Naive thymus-derived CD4-positive, alpha-beta T cell (primary cell): ENCODE measurements at regions of chr17 and their contacts with region 1.

Region 1: GRCh38 chr17:35088881-35089585 is 25.5 kb upstream of the RFFL start:
- DNase-seq: peak; percentile 77 to 95 (median 89)
- ATAC-seq: peak; percentile 94
- H3K4me3 ChIP-seq: peak overlapping the region; percentile 93
- H3K4me3 Mint-ChIP-seq: peak overlapping the region; percentile 93 to 98 (median 94)
- H3K27ac ChIP-seq: peak overlapping the region; percentile 89
- H3K27ac Mint-ChIP-seq: peak overlapping the region; percentile 89 to 97 (median 94)
- H3K4me1 ChIP-seq: peaks cover 13 to 27% of the 10 kb centered on the region in 2 donors
- H3K4me1 Mint-ChIP-seq: peaks cover 21 to 52% (median 44%) of the 10 kb centered on the region in 7 donors
- H3K27me3 ChIP-seq: no peaks in the 10 kb centered on the region
- H3K27me3 Mint-ChIP-seq: no peaks in the 10 kb centered on the region

Region 2: GRCh38 chr17:34584805-34585416 is 504.1 kb before region 1 on chr17:
- CTCF ChIA-PET with region 1: no interaction called
- POLR2A ChIA-PET with region 1: no interaction called
- intact Hi-C with region 1: loop called in 1 of 2 experiments (anchors 1 kb)
- DNase-seq: peak in 4 of 9 donors; percentile 21 to 35 (median 32)
- ATAC-seq: peak; percentile 51
- H3K4me3 ChIP-seq: no peak overlapping the region
- H3K4me3 Mint-ChIP-seq: no peak overlapping the region
- H3K27ac ChIP-seq: no peak overlapping the region
- H3K27ac Mint-ChIP-seq: no peak overlapping the region
- H3K4me1 ChIP-seq: peaks cover 0 to 6% of the 10 kb centered on the region in 2 donors
- H3K4me1 Mint-ChIP-seq: peaks cover 0 to 15% (median 4%) of the 10 kb centered on the region in 7 donors
- H3K27me3 ChIP-seq: peaks cover 0 to 7% of the 10 kb centered on the region in 2 donors
- H3K27me3 Mint-ChIP-seq: peaks cover 41 to 78% (median 52%) of the 10 kb centered on the region in 5 donors

Region 3: DNA sequence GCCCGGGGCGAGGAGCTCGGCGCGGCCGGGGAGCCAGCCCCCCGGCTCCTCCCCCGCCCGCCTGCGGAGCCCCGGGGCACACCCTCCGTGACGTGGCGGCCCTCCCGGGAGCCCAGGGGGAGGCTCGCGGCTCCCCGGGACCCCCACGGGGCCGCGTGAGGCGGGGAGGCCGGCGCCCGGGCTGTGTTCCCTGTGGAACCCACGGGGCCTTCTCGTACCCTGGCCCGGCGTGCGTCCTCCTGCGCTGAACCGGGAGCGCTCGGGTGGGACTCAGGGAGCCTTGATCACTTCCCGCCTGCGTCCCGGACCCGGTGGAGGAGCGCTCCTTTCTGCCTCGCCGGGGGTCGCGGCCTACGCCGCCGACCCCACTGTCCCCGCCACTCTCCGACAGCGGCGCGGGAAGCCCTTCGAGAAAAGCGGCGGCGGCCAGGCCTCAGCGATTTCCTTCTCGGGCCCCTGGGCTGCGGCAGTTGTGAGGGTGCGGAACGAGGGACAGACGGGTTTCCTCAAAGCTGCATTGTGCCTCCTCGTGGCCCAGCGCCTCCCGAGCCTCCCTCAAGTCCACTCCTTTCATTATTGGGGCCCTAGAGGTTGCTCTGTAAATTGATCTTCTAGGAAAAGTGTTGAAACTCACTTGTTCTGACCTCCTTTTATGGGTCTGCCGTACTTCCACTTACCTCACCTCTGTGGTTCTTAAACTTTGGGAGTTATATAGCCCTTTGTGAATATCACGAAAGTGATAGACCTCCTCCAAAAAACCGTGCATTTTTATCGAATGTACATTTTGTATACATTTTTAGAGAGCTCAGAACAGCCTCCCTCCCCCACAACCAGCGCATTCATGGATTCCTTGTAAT is 108.1 kb before region 1 on chr17:
- CTCF ChIA-PET with region 1: no interaction called
- POLR2A ChIA-PET with region 1: interaction called, 14 read pairs
- intact Hi-C with region 1: loop called (anchors 1 kb)
- DNase-seq: peak in 7 of 9 donors; percentile 65 to 87 (median 74)
- ATAC-seq: peak; percentile 91
- H3K4me3 ChIP-seq: peak overlapping the region; percentile 68
- H3K4me3 Mint-ChIP-seq: peak overlapping the region; percentile 87 to 97 (median 94)
- H3K27ac ChIP-seq: peak overlapping the region; percentile 99
- H3K27ac Mint-ChIP-seq: peak overlapping the region; percentile 91 to 98 (median 97)
- H3K4me1 ChIP-seq: peaks cover 17 to 26% of the 10 kb centered on the region in 2 donors
- H3K4me1 Mint-ChIP-seq: peaks cover 36 to 57% (median 53%) of the 10 kb centered on the region in 7 donors
- H3K27me3 ChIP-seq: no peaks in the 10 kb centered on the region
- H3K27me3 Mint-ChIP-seq: no peaks in the 10 kb centered on the region

Region 4: GRCh38 chr17:35046740-35047283 is 42.2 kb before region 1 on chr17:
- CTCF ChIA-PET with region 1: interaction called, 3 read pairs
- POLR2A ChIA-PET with region 1: interaction called, 13 read pairs
- intact Hi-C with region 1: loop called (anchors 1 kb)
- DNase-seq: peak in 8 of 9 donors; percentile 54 to 82 (median 70)
- ATAC-seq: peak; percentile 77
- H3K4me3 ChIP-seq: peak overlapping the region; percentile 45
- H3K4me3 Mint-ChIP-seq: peak overlapping the region; percentile 71 to 92 (median 84)
- H3K27ac ChIP-seq: peak overlapping the region; percentile 69
- H3K27ac Mint-ChIP-seq: peak overlapping the region; percentile 85 to 97 (median 93)
- H3K4me1 ChIP-seq: peaks cover 79 to 81% of the 10 kb centered on the region in 2 donors
- H3K4me1 Mint-ChIP-seq: peaks cover 52 to 84% (median 74%) of the 10 kb centered on the region in 7 donors
- H3K27me3 ChIP-seq: no peaks in the 10 kb centered on the region
- H3K27me3 Mint-ChIP-seq: no peaks in the 10 kb centered on the region

Region 5: DNA sequence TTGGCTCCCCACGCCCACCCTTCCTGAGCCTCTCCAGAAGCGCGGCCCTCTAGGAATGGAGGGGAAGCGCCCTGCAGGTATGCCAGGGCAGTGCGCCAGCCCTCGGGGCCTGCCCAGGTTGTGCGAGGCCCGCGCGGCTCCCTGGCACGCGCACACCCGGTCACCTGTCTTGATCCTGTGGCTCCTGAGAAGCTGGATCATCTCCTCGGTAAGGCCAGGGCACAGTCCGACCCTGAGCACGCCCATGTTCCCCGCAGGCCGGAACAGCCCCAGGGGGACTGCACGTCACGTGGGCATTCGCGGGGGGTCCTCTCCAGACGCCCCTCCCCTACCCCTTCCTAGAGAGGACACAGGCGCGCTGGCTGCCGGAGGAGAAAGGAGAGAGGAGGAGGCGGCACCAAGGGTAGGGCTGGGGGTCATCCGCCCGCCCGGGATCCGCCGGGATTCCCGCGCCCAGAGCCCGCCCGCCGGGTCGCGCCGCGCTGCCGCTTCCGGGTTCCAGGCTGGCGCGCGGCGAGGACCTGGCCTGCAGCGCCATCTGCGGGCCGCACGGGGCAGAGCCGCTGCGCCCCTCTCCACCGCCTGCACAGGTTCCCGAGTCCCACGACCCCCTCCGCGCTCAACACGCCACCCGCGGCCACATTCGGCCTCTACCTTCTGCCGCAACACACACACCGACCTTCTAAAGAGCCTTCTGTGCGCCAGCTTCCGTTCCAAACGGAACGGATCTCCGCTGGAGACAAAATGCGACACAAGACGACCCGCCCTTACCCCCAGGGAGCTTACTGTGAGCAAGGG is 30.5 kb after region 1 on chr17 and contains the start of gene RAD51D:
- CTCF ChIA-PET with region 1: interaction called, 18 read pairs
- POLR2A ChIA-PET with region 1: interaction called, 11 read pairs
- intact Hi-C with region 1: loop called (anchors 1 kb)
- DNase-seq: peak; percentile 71 to 90 (median 83)
- ATAC-seq: peak; percentile 96
- H3K4me3 ChIP-seq: peak within 1 kb of the TSS; percentile 82
- H3K4me3 Mint-ChIP-seq: peak within 1 kb of the TSS; percentile 87 to 97 (median 94)
- H3K27ac ChIP-seq: peak within 1 kb of the TSS; percentile 81
- H3K27ac Mint-ChIP-seq: peak within 1 kb of the TSS; percentile 88 to 96 (median 93)
- H3K4me1 ChIP-seq: peaks cover 14 to 15% of the 10 kb centered on the region in 2 donors
- H3K4me1 Mint-ChIP-seq: peaks cover 23 to 45% (median 33%) of the 10 kb centered on the region in 7 donors
- H3K27me3 ChIP-seq: no peaks in the 10 kb centered on the region
- H3K27me3 Mint-ChIP-seq: no peaks in the 10 kb centered on the region
- total RNA-seq, gene RAD51D: 15.0 to 34.2 (median 25.4) TPM

Region 6: DNA sequence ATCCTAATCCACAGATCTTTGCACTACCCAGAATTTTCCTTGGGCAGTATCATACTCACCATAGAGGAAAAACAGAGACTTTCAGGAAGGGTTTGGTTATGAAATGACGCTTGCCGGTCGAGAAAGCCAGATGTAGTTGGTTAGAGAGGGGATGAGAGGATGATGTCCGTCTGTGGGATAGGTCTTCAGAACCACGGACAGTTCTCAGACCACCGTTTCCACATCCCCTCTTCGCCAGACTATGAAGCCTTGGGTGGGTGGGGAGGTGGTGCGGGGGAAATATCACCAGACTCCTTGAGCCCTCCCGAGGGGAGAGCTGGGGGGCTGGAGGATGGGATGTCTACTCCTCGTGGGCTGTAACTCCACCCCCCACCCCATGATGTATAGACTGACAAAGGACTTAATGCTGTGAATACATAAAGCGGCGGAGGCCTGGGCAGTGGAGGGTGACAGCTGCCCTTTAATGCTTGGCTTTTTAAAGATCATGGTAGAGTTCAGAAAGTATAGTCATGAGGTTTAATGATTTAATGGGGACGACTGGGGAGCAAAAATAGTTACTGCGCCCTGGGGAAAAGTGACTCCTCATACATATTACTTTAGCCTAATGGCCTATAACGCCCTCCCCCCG is 1609.0 kb after region 1 on chr17:
- CTCF ChIA-PET with region 1: no interaction called
- POLR2A ChIA-PET with region 1: no interaction called
- intact Hi-C with region 1: no loop called
- DNase-seq: no peak
- ATAC-seq: no peak
- H3K4me3 ChIP-seq: no peak overlapping the region
- H3K4me3 Mint-ChIP-seq: no peak overlapping the region
- H3K27ac ChIP-seq: no peak overlapping the region
- H3K27ac Mint-ChIP-seq: no peak overlapping the region
- H3K4me1 ChIP-seq: no peaks in the 10 kb centered on the region
- H3K4me1 Mint-ChIP-seq: peaks cover 0 to 7% (median 0%) of the 10 kb centered on the region in 7 donors
- H3K27me3 ChIP-seq: no peaks in the 10 kb centered on the region
- H3K27me3 Mint-ChIP-seq: peaks cover 18 to 61% (median 57%) of the 10 kb centered on the region in 5 donors